ENCODE measurements at regions of chr15 and their contacts with region 1.

Region 1: DNA sequence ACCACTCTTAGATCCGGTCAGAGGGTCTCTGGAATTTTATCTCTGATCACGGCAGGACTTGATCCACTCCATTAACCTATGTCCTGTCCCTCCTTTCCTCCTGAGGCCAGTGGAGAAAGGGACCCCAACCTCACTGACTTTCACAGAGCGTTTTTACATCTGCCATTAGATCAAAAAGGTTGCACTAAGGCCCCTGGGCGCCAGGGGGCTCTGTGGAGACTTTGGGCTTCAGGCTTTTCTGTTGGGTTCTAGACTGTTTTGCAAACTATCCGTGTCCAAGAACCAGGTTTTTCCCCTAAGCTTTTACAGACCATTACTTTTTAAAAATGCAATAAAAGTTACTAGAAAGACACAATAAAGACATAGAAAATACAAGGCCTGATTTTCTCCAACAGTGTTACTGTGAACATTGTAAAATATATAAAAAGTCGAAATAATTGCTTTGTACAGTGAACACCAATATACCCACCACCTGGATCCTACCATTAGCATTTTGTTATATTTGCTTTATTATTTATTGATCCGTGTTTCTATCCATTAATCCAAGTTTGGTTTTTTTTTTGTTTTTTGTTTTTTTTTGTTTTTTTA is 159.7 kb downstream of the POLR2M start:
- DNase-seq: peak; percentile 68
- H3K4me3 ChIP-seq: no peak overlapping the region
- H3K27ac ChIP-seq: no peak overlapping the region
- H3K4me1 ChIP-seq: no peaks in the 10 kb centered on the region
- H3K27me3 ChIP-seq: peaks cover 17% of the 10 kb centered on the region
- CTCF ChIP-seq: peak; percentile 85

Region 2: GRCh38 chr15:57675481-57676181 is 190.6 kb before region 1 on chr15:
- intact Hi-C with region 1: loop called (anchors 10 kb)
- DNase-seq: no peak
- H3K4me3 ChIP-seq: no peak overlapping the region
- H3K27ac ChIP-seq: peak overlapping the region; percentile 39
- H3K4me1 ChIP-seq: peaks cover 73% of the 10 kb centered on the region
- H3K27me3 ChIP-seq: no peaks in the 10 kb centered on the region
- CTCF ChIP-seq: no peak

Region 3: DNA sequence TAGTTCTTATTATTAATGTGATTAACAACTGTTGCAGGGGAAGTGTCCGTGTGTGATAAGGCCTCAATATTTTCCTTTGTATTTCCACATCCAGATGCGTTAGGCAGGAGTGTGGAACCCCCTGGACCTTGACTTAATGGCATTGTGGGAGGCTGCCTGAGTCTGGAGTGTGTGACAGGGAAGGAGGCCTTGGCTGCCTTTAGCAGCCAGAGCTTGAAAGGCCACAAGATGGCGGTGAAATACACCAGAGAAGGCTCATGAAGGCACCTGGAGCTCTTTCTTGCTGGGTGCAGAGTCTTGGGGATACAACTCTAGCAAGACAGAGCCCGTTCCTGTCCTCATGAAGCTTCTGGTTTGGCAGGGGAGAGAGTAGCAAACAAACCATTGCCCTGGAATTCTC is 122.8 kb before region 1 on chr15:
- intact Hi-C with region 1: no loop called
- DNase-seq: no peak
- H3K4me3 ChIP-seq: no peak overlapping the region
- H3K27ac ChIP-seq: no peak overlapping the region
- H3K4me1 ChIP-seq: no peaks in the 10 kb centered on the region
- H3K27me3 ChIP-seq: no peaks in the 10 kb centered on the region
- CTCF ChIP-seq: peak; percentile 18

Measured in left ventricle myocardium inferior (tissue), 1 donor.